ENCODE measurements at regions of chr2 and their contacts with region 1.

Region 1: DNA sequence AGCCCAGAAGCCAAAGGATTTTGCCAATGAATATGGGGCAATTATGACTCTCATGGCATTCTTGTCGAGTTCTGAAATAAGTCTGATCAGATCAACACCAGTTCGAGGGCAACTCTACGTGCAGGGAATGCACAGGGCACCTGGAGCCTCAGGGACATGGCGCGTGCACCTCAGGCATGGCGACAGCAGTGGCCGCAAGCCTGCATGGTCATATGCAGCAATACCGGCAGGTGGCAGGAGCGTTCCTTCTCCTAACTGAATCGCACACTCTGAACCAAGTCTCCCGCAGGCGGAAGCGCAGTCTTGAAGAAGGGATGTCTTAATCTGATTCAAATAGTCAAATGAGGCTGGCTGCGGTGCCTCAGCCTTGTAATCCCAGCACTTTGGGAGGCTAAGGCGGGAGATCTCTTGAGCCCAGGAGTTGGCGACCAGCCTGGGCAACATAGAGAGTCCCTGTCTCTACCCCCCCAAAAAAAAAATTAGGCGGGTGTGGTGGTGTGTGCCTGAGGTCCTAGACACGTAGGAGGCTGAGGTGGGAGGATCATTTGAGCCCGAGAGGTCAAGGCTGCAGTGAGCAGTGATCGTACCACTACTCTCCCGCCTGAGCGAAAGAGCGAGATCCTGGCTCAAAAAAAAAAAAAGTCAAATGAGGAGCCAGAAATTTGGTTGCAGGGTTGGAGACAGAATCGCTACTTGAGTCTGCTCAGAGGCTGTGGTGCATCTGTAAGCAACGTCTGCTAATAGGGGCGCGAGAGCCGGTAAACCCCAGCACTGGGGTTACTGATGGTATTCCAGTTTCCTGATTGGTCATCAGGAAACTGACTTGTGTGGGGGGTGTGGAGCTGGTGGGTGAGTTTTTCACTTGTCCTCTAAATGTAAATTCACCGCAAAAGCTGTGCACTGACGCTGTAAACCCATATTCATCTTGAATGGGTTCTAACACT is 28.8 kb downstream of the FHL2 start:
- DNase-seq: peak; percentile 78 to 91 (median 84)
- ATAC-seq: peak; percentile 100
- H3K4me3 ChIP-seq: no peak overlapping the region
- H3K4me3 Mint-ChIP-seq: no peak overlapping the region
- H3K27ac ChIP-seq: no peak overlapping the region
- H3K27ac Mint-ChIP-seq: no peak overlapping the region
- H3K4me1 ChIP-seq: peaks cover 24% of the 10 kb centered on the region
- H3K4me1 Mint-ChIP-seq: peaks cover 16% of the 10 kb centered on the region
- H3K27me3 ChIP-seq: no peaks in the 10 kb centered on the region
- H3K27me3 Mint-ChIP-seq: no peaks in the 10 kb centered on the region
- CTCF ChIP-seq: peak; percentile 89

Region 2: DNA sequence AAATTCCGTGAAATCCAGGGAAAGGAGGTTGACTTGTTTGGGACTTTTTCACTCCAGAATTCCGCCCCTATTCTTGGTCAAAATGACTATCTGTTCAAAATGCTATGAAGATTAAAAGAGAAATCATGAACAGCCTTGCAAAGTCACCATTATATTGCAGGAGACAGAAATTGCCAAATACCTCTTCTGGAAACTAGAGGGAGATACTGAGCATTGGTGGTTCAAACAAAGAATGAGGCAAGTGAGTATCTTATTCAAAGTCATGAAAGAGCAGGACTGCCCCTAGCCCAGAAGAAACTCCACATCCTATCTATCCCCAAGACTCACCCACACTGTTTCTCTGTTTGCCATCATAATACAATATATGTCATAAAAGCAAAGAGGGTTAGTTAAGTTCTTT is 1378.4 kb before region 1 on chr2:
- CTCF ChIA-PET with region 1: no interaction called
- POLR2A ChIA-PET with region 1: no interaction called
- intact Hi-C with region 1: no loop called
- DNase-seq: no peak
- ATAC-seq: no peak
- H3K4me3 ChIP-seq: no peak overlapping the region
- H3K4me3 Mint-ChIP-seq: no peak overlapping the region
- H3K27ac ChIP-seq: no peak overlapping the region
- H3K27ac Mint-ChIP-seq: no peak overlapping the region
- H3K4me1 ChIP-seq: no peaks in the 10 kb centered on the region
- H3K4me1 Mint-ChIP-seq: no peaks in the 10 kb centered on the region
- H3K27me3 ChIP-seq: no peaks in the 10 kb centered on the region
- H3K27me3 Mint-ChIP-seq: no peaks in the 10 kb centered on the region
- CTCF ChIP-seq: no peak

Region 3: GRCh38 chr2:105329561-105330495 is 40.2 kb before region 1 on chr2 and contains the start of gene TGFBRAP1:
- CTCF ChIA-PET with region 1: no interaction called
- POLR2A ChIA-PET with region 1: no interaction called
- intact Hi-C with region 1: no loop called
- DNase-seq: peak; percentile 13 to 85 (median 50)
- ATAC-seq: peak; percentile 86
- H3K4me3 ChIP-seq: peak within 1 kb of the TSS; percentile 73
- H3K4me3 Mint-ChIP-seq: peak within 1 kb of the TSS; percentile 91
- H3K27ac ChIP-seq: peak within 1 kb of the TSS; percentile 83 to 87
- H3K27ac Mint-ChIP-seq: peak within 1 kb of the TSS; percentile 94
- H3K4me1 ChIP-seq: peaks cover 29% of the 10 kb centered on the region
- H3K4me1 Mint-ChIP-seq: peaks cover 45% of the 10 kb centered on the region
- H3K27me3 ChIP-seq: no peaks in the 10 kb centered on the region
- H3K27me3 Mint-ChIP-seq: no peaks in the 10 kb centered on the region
- CTCF ChIP-seq: no peak
- total RNA-seq, gene TGFBRAP1: 14.9 to 16.6 TPM

Region 4: DNA sequence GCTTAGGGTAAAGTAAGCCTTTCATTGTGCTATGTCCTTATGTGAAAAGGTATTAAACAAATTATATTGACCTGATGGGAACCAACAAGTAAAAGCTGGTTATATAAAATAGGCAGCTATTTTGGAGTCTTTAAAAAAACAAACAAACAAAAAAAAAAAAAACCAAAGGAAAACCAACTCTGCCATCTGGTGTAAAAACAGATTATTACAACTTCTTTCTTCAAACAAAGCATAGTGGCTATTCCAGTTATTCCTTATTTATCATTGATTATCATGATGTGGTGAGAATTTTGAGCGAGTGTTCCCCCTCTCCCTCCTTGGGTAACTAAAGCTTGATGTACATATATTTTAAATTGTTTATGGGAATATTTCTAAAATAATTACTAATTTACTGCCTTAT is 151.2 kb after region 1 on chr2:
- CTCF ChIA-PET with region 1: interaction called, 4 read pairs
- POLR2A ChIA-PET with region 1: interaction called, 3 read pairs
- intact Hi-C with region 1: loop called (anchors 1 kb)
- DNase-seq: peak in 3 of 14 experiments; percentile 20 to 55 (median 47)
- ATAC-seq: no peak
- H3K4me3 ChIP-seq: no peak overlapping the region
- H3K4me3 Mint-ChIP-seq: no peak overlapping the region
- H3K27ac ChIP-seq: no peak overlapping the region
- H3K27ac Mint-ChIP-seq: no peak overlapping the region
- H3K4me1 ChIP-seq: no peaks in the 10 kb centered on the region
- H3K4me1 Mint-ChIP-seq: no peaks in the 10 kb centered on the region
- H3K27me3 ChIP-seq: no peaks in the 10 kb centered on the region
- H3K27me3 Mint-ChIP-seq: no peaks in the 10 kb centered on the region
- CTCF ChIP-seq: peak; percentile 81

Region 5: DNA sequence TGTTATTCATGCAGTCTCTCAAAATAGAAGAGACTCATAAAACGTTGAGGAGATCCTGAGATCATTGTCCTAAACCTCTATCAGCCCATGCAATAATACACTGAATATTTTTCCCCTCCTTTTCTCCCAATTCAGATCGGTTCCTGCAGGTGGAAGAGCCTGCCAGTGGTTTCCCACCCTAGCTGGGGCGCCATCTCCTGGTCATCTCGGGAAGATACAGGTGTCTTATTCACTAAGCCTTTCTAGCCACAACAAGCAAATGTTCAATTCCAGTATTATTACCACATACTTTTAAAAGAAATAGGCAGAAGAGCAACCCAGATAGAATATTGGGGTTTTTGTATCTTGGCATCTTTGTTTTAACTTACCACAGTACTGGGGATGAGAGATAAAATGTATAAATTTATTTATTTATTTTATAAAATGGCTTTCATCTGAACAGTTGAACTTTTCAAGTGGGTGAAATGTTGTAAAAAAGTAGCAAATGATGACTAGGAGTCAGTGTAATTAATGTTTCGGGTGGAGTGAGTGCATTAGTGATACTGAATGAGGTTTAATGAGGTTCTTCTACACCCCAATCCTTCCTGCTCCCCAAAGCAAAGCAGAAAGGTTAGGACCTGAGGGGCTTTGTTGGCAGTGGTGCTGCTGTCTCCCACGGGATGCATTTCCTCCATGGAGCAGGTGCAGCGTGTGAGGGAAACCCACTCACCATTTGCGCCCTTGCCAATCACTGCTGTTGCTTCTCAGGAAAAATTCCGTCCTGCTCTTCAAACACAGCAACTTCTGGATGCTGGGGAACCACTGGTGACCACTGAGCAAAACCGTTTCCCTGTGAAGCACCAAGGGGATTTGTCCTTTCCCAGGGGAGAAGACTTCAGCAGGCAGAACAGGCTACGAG is 176.0 kb after region 1 on chr2:
- CTCF ChIA-PET with region 1: interaction called, 5 read pairs
- POLR2A ChIA-PET with region 1: no interaction called
- intact Hi-C with region 1: loop called (anchors 1 kb)
- DNase-seq: peak; percentile 50 to 81 (median 57)
- ATAC-seq: peak; percentile 56
- H3K4me3 ChIP-seq: peak overlapping the region; percentile 34
- H3K4me3 Mint-ChIP-seq: peak overlapping the region; percentile 55
- H3K27ac ChIP-seq: no peak overlapping the region
- H3K27ac Mint-ChIP-seq: peak overlapping the region; percentile 81
- H3K4me1 ChIP-seq: peaks cover 19% of the 10 kb centered on the region
- H3K4me1 Mint-ChIP-seq: peaks cover 19% of the 10 kb centered on the region
- H3K27me3 ChIP-seq: no peaks in the 10 kb centered on the region
- H3K27me3 Mint-ChIP-seq: no peaks in the 10 kb centered on the region
- CTCF ChIP-seq: peak; percentile 93

Region 6: GRCh38 chr2:106104332-106105062 is 734.5 kb after region 1 on chr2:
- CTCF ChIA-PET with region 1: no interaction called
- POLR2A ChIA-PET with region 1: no interaction called
- intact Hi-C with region 1: loop called in 1 of 2 experiments (anchors 5 kb)
- DNase-seq: peak; percentile 40 to 85 (median 58)
- ATAC-seq: peak; percentile 80
- H3K4me3 ChIP-seq: no peak overlapping the region
- H3K4me3 Mint-ChIP-seq: no peak overlapping the region
- H3K27ac ChIP-seq: no peak overlapping the region
- H3K27ac Mint-ChIP-seq: peak overlapping the region; percentile 55
- H3K4me1 ChIP-seq: no peaks in the 10 kb centered on the region
- H3K4me1 Mint-ChIP-seq: peaks cover 9% of the 10 kb centered on the region
- H3K27me3 ChIP-seq: no peaks in the 10 kb centered on the region
- H3K27me3 Mint-ChIP-seq: no peaks in the 10 kb centered on the region
- CTCF ChIP-seq: peak; percentile 97

Region 7: DNA sequence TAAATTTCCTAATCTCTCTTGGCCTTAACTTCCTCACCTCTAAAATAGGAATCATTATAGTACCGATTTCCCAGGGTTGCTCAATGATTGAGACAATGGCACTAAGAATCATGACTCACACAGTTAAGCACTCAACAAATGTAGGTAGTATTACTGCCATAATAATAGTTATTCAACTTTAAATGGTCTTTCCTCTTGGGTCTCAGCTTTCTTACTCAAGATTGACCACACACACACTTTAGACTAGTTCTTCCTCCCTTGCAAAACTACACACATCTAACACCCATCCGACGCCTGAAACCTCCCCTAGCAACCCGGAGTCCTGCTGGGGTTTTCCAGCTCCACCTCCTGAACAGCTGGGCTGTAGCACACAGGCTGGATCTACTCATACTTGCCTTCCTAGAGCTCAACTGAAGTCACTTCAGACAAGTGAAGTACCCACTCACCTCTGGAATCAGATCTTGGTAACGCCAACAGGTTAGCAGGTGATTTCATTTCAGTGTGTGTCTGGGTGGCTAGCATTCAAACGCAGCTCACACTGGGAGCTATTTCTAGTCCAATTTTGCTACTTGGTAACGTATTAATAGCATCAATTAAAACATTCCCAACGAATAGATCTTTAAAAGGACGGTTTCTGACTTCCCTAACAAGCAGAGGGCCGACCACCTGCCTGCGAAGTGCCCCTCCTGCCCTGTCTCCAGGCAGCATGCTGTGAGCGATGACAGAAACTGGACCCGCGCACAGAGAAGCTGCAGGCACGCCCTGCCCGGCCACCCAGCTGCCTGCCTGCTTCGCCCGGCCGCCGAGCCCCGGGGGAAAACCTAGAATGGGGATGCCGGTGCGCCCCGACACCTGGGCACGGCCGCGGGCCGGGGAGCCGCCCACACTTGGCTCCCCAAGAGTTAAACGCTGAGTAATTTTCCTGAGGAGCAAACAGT is 823.0 kb after region 1 on chr2:
- CTCF ChIA-PET with region 1: no interaction called
- POLR2A ChIA-PET with region 1: no interaction called
- intact Hi-C with region 1: no loop called
- DNase-seq: peak in 13 of 14 experiments; percentile 7 to 82 (median 19)
- ATAC-seq: no peak
- H3K4me3 ChIP-seq: peak overlapping the region; percentile 76
- H3K4me3 Mint-ChIP-seq: peak overlapping the region; percentile 91
- H3K27ac ChIP-seq: peak overlapping the region in 1 of 2 donors; percentile 71
- H3K27ac Mint-ChIP-seq: peak overlapping the region; percentile 82
- H3K4me1 ChIP-seq: peaks cover 53% of the 10 kb centered on the region
- H3K4me1 Mint-ChIP-seq: peaks cover 59% of the 10 kb centered on the region
- H3K27me3 ChIP-seq: no peaks in the 10 kb centered on the region
- H3K27me3 Mint-ChIP-seq: no peaks in the 10 kb centered on the region
- CTCF ChIP-seq: no peak

Region 8: GRCh38 chr2:106542811-106543259 is 1172.8 kb after region 1 on chr2:
- CTCF ChIA-PET with region 1: no interaction called
- POLR2A ChIA-PET with region 1: no interaction called
- intact Hi-C with region 1: loop called (anchors 5 kb)
- DNase-seq: peak; percentile 50 to 83 (median 70)
- ATAC-seq: peak; percentile 98
- H3K4me3 ChIP-seq: peak overlapping the region; percentile 28
- H3K4me3 Mint-ChIP-seq: peak overlapping the region; percentile 76
- H3K27ac ChIP-seq: no peak overlapping the region
- H3K27ac Mint-ChIP-seq: no peak overlapping the region
- H3K4me1 ChIP-seq: peaks cover 6% of the 10 kb centered on the region
- H3K4me1 Mint-ChIP-seq: peaks cover 5% of the 10 kb centered on the region
- H3K27me3 ChIP-seq: peaks cover 15 to 26% of the 10 kb centered on the region in 2 experiments
- H3K27me3 Mint-ChIP-seq: peaks cover 30% of the 10 kb centered on the region
- CTCF ChIP-seq: peak; percentile 96

Region 9: DNA sequence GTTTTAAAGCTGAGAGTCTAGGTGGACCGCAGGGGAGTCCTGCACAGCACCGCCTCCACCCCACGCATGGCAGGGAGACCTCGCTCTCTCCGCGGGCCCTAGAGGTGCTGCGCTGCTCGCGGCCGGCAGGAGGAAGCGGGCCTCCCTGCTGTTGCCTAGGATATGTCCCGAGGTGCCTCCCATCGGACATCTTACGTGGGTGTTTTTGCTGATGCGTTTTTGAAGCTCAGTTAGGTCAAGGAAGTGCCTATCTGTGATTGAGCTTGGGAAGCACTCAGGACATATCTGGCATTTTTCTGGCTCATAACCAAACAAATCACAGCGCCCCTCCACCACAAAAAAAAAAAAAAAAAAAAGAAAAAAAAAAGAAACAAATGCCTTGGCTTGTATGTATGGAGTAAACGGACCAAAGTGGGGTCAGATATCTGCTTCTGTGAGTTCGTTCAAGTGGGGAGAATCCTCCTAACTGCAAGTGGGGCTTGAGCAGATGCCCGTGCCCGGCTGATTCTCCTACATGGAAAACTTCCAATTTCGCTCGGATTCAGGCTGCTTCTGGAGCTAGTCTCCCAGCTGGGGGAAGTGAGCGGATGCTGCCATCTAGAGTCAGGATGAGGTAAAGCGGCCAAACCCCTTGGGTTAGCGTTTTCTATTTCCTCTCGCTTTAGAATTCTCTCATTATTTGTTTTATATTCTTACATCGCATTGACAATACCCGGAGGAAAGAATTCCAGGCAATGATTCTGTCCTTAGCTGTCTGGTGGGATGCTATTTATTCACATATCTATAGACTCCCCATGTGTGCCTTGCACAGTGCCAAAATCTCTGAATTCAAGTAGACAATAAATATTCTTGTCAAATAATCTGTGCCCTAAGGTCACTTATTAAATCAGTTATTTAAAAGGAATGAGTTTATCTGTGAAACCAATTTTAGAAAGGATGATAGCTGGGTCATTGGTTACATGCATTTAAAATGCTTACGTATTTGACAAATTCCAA is 1212.4 kb after region 1 on chr2:
- CTCF ChIA-PET with region 1: no interaction called
- POLR2A ChIA-PET with region 1: no interaction called
- intact Hi-C with region 1: loop called (anchors 1 to 5 kb)
- DNase-seq: peak; percentile 31 to 76 (median 51)
- ATAC-seq: peak; percentile 88
- H3K4me3 ChIP-seq: peak overlapping the region; percentile 58
- H3K4me3 Mint-ChIP-seq: peak overlapping the region; percentile 91
- H3K27ac ChIP-seq: no peak overlapping the region
- H3K27ac Mint-ChIP-seq: no peak overlapping the region
- H3K4me1 ChIP-seq: peaks cover 10% of the 10 kb centered on the region
- H3K4me1 Mint-ChIP-seq: peaks cover 22% of the 10 kb centered on the region
- H3K27me3 ChIP-seq: peaks cover 17% of the 10 kb centered on the region in 2 experiments
- H3K27me3 Mint-ChIP-seq: peaks cover 57% of the 10 kb centered on the region
- CTCF ChIP-seq: peak; percentile 95